ENCODE measurements at regions of chr5 and their contacts with region 1.

Region 1: DNA sequence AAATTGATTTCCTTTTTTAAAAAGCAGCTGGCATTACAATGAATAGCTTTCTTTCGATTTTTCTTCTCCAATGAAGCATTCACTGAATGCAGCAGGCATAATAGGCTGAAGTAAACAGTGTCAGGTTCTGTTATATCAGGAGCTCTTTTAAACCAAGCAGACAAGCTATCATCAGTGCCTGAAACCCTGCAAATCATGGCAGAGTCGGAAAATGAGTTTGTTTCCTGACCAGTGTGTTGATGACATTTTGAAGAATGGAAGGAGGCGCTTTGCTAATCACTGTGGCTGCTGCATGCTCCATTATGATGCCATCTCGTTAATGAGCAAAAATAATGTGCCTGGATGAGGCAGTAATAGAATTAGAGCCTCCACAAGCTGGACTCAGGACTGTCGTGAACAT is 284.5 kb downstream of the ZNF608 start:
- DNase-seq: no peak
- ATAC-seq: no peak
- H3K4me3 ChIP-seq: no peak overlapping the region
- H3K4me1 ChIP-seq: no peaks in the 10 kb centered on the region
- CTCF ChIP-seq: no peak

Region 2: DNA sequence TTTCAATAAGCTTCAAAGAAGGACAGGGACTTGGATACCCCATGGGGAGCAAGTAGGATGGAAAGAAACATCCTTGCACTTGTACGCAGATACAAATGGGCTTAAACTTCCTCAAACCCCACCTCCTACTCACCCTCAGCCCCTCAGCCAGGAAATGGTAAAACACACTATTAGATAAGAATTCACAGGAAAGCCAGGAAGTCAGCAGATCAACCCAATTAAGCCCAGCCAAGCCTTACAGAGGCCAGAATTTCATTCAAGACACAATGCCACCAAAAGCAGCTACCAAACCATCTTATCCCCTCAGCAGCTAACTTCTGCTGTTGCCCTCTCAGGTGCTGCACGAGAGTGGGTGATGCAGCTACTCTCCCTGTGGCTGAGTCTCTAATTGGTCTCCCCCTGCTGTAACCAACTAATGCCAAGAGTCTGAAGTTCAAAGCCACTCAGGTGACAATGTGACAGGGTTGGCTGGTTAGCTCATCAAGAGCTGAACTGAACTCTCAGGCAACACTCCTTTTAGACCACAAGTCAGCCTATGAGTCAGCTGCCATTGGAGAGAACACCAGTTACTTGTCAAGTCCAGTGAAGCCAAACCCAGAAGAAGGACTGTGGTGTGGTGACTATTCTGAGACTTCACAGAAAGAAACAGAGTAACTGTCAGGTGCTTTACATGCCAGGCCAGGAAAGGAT is 82.6 kb after region 1 on chr5:
- intact Hi-C with region 1: no loop called
- DNase-seq: no peak
- ATAC-seq: peak; percentile 14
- H3K4me3 ChIP-seq: no peak overlapping the region
- H3K4me1 ChIP-seq: no peaks in the 10 kb centered on the region
- CTCF ChIP-seq: no peak

Region 3: GRCh38 chr5:124649491-124650146 is 187.7 kb after region 1 on chr5:
- intact Hi-C with region 1: no loop called
- DNase-seq: peak; percentile 76 to 89 (median 77)
- ATAC-seq: peak; percentile 79
- H3K4me3 ChIP-seq: no peak overlapping the region
- H3K4me1 ChIP-seq: peaks cover 36% of the 10 kb centered on the region
- CTCF ChIP-seq: no peak

Region 4: DNA sequence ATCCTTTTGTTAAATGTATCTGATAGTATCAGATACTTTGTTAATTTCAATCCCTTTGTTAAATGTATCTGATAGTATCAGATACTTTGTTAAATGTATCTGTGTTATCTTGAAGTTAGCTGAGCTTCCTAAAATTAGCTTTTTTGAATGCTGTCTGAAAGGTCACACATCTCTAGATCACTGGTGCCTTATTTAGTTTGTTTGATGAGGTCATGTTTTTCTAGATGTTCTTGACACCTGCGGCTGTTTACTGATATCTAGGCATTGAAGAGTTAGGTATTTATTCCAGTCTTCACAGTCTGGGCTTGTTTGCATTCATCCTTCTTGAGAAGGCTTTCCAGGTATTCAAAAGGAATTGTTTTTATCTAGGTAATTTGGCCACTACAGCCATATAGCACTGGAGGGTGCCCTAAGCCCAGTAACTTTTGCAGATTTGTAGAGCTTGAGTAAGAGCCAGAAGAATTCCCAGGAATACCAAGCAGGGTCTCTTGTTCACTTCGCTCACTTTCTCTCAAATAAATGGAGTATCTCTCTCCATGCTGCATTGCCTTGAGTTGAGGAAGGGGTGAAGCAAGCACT is 1525.8 kb after region 1 on chr5:
- intact Hi-C with region 1: loop called in 1 of 2 experiments (anchors 10 kb)
- DNase-seq: no peak
- ATAC-seq: no peak
- H3K4me3 ChIP-seq: no peak overlapping the region
- H3K4me1 ChIP-seq: no peaks in the 10 kb centered on the region
- CTCF ChIP-seq: no peak